CD4-positive, alpha-beta memory T cell (primary cell): ENCODE measurements at regions of chr20 and their contacts with region 1.

Region 1: GRCh38 chr20:48750947-48751635 is 76.7 kb downstream of the PREX1 start:
- DNase-seq: peak; percentile 53 to 73 (median 58)
- H3K4me3 ChIP-seq: peak overlapping the region; percentile 39
- H3K4me3 Mint-ChIP-seq: peak overlapping the region; percentile 65 to 85 (median 75)
- H3K27ac ChIP-seq: peak overlapping the region; percentile 55
- H3K27ac Mint-ChIP-seq: peak overlapping the region; percentile 84 to 95 (median 89)
- H3K4me1 ChIP-seq: peaks cover 76% of the 10 kb centered on the region
- H3K4me1 Mint-ChIP-seq: peaks cover 53 to 89% (median 76%) of the 10 kb centered on the region in 4 donors
- H3K27me3 ChIP-seq: no peaks in the 10 kb centered on the region
- H3K27me3 Mint-ChIP-seq: no peaks in the 10 kb centered on the region

Region 2: GRCh38 chr20:48685861-48686771 is 65.0 kb before region 1 on chr20:
- CTCF ChIA-PET with region 1: no interaction called
- POLR2A ChIA-PET with region 1: no interaction called
- intact Hi-C with region 1: no loop called
- DNase-seq: no peak
- H3K4me3 ChIP-seq: no peak overlapping the region
- H3K4me3 Mint-ChIP-seq: no peak overlapping the region
- H3K27ac ChIP-seq: no peak overlapping the region
- H3K27ac Mint-ChIP-seq: peak overlapping the region in 2 of 7 donors; percentile 17 to 72
- H3K4me1 ChIP-seq: no peaks in the 10 kb centered on the region
- H3K4me1 Mint-ChIP-seq: peaks cover 4 to 26% (median 17%) of the 10 kb centered on the region in 4 donors
- H3K27me3 ChIP-seq: no peaks in the 10 kb centered on the region
- H3K27me3 Mint-ChIP-seq: no peaks in the 10 kb centered on the region

Region 3: DNA sequence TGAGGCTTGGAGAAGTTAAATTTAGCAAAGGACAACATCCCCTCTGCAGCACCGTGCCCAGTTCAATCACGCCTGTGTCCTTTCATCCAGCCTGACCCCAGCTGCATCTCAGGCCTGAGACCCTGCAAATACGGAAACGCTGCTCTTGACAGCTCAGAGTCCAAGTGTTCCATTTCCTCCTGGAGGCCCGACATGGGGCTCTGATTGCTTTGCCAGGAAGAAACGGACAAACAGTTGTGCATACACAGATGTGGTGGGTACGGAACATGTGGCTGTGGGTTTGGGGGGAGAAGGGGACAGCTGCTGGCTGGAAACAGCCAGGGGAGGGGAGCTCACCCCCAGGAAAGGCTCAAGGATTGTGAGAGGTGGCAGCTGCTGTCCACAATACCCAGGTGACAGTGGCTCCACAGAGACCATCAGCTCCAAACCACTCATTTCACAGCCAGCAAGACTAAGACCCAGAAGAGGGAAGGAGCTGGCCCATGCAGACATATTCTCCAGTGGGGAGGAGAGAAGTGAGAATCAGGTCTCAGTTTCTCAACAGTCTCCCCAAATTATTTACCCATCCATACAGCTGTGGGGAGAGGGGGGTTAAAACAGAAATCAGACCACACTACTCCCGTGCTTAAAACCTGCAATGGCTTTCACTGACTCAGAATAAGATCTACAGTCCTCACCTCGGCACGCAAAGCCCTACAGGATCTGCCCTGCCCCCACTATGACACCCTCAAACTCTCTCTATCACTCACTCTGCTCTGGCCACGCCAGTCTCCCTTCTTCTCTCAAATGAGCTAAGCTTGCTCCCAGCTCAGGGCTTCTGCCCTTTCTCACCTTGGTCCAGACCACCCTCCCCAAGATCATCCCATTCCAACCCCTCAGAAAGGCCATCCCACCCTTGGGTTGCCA is 12.4 kb before region 1 on chr20:
- CTCF ChIA-PET with region 1: no interaction called
- POLR2A ChIA-PET with region 1: interaction called, 13 read pairs
- intact Hi-C with region 1: no loop called
- DNase-seq: peak in 2 of 5 donors; percentile 28 to 74
- H3K4me3 ChIP-seq: no peak overlapping the region
- H3K4me3 Mint-ChIP-seq: peak overlapping the region in 7 of 8 donors; percentile 39 to 83 (median 61)
- H3K27ac ChIP-seq: peak overlapping the region; percentile 38
- H3K27ac Mint-ChIP-seq: peak overlapping the region; percentile 78 to 92 (median 88)
- H3K4me1 ChIP-seq: peaks cover 61% of the 10 kb centered on the region
- H3K4me1 Mint-ChIP-seq: peaks cover 39 to 68% (median 55%) of the 10 kb centered on the region in 4 donors
- H3K27me3 ChIP-seq: no peaks in the 10 kb centered on the region
- H3K27me3 Mint-ChIP-seq: no peaks in the 10 kb centered on the region

Region 4: DNA sequence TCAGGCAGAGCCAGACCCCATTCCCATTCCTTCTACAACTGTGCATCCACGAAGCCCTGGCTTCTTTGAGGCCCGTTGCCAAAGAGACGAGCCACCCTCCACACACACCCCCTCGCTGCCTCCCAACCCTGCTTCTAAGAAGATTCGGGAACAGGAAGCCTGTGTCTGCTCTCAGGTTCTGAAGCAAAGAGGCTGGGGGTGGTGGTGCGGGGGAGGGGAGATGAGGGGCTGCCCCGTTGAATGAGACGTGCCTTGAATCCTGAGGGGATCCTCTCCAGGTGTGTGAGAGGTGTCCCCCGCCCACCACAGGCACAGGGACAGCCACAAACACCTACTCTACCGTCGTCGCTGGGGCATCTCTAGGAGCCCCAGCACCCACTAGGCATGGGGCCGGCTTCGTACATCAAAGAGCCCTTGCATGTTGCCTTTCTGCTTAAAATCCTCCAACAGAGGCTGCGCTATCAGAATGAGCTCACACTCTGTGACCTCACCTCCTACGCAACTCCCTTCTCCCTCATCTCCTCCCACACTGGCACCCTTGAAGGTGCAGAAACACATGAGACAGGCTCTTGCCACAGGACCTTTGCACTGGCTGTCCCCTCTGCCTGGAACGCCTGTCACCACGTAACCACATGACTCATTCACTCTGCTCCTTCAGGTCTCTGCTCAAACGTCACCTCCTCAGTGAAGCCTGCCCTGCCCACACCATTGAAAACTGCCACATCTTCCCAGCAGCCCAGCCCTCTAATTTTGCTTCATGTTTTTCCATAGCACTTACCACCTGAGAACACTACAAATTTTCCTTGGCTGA is 18.2 kb after region 1 on chr20:
- CTCF ChIA-PET with region 1: no interaction called
- POLR2A ChIA-PET with region 1: interaction called, 22 read pairs
- intact Hi-C with region 1: no loop called
- DNase-seq: peak; percentile 79 to 99 (median 82)
- H3K4me3 ChIP-seq: no peak overlapping the region
- H3K4me3 Mint-ChIP-seq: peak overlapping the region; percentile 50 to 75 (median 62)
- H3K27ac ChIP-seq: peak overlapping the region; percentile 83
- H3K27ac Mint-ChIP-seq: peak overlapping the region; percentile 84 to 98 (median 96)
- H3K4me1 ChIP-seq: peaks cover 89% of the 10 kb centered on the region
- H3K4me1 Mint-ChIP-seq: peaks cover 58 to 94% (median 78%) of the 10 kb centered on the region in 4 donors
- H3K27me3 ChIP-seq: no peaks in the 10 kb centered on the region
- H3K27me3 Mint-ChIP-seq: no peaks in the 10 kb centered on the region